ENCODE measurements at regions of chr13 and their contacts with region 1.

Region 1: DNA sequence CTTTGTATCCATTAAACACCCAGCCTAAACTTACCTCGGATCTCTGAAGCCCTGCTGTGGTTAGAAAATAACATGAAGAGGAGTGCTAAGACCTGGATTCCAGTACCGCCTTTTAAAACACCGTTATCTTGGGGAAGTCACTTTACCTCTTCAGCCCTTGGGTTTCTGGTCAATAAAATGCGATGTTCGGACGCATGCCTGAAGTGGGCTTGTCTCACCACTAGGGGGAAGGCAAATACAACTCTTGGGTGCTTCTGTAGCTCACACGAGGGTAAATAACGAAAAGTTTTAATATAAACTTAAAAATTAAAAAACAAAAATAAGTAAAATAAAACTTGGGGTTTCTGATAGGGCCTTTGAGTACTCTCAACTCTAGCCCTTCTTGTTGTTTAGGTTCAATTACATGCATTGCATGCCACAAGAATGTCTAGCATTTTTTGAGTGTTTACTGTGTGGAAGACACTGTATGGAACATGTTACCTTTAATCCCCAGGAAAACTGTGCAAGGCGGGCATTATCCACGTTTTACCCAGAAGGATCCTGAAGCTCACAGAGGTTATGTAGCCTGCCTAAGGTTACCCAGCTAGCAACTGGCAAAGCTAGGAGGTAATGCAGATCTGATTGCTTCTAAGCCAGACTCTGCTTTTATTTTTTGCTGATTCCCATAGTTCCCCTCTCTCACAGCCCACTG is 240.4 kb downstream of the LMO7 start:
- DNase-seq: peak; percentile 49 to 55
- H3K4me3 ChIP-seq: no peak overlapping the region
- H3K27ac ChIP-seq: no peak overlapping the region
- H3K4me1 ChIP-seq: no peaks in the 10 kb centered on the region
- H3K27me3 ChIP-seq: no peaks in the 10 kb centered on the region
- CTCF ChIP-seq: peak; percentile 70 to 87 (median 82)
- POLR2A ChIP-seq: no peak

Region 2: GRCh38 chr13:76473552-76474134 is 597.1 kb after region 1 on chr13:
- intact Hi-C with region 1: loop called (anchors 10 kb)
- DNase-seq: peak; percentile 58 to 75
- H3K4me3 ChIP-seq: no peak overlapping the region
- H3K27ac ChIP-seq: peak overlapping the region in 1 of 2 donors; percentile 1
- H3K4me1 ChIP-seq: no peaks in the 10 kb centered on the region
- H3K27me3 ChIP-seq: no peaks in the 10 kb centered on the region
- CTCF ChIP-seq: peak; percentile 72 to 82 (median 78)
- POLR2A ChIP-seq: no peak

Region 3: DNA sequence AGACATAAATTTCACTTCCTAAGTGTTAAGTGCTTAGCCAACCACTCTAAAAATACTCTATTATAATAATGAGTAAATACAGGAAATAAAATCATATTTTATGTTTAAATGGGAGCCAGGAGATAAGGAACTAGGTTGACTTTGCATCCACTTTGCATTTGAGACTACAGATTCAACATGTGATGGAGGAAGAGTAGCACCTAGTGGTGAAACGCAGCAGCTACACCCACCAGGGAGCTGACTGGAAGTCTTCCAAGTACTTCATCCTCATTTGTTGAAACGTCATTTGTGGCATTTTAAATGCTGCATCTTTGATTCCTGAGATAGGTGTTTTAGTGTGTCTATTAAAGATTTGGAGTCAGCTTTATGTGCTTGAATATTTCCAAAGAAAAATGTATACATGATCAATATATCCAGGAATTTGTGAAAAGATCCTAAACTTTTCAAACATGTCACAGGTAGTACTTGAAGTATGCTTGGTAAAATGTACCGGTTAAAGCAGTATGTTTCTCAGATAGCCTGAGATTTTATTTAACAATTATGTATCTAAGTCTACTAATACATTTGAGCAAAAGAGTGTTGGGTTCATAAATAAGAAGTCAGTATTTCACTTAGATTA is 1027.1 kb after region 1 on chr13:
- intact Hi-C with region 1: loop called (anchors 10 kb)
- DNase-seq: peak; percentile 46 to 62
- H3K4me3 ChIP-seq: no peak overlapping the region
- H3K27ac ChIP-seq: no peak overlapping the region
- H3K4me1 ChIP-seq: no peaks in the 10 kb centered on the region
- H3K27me3 ChIP-seq: no peaks in the 10 kb centered on the region
- CTCF ChIP-seq: peak; percentile 93 to 99 (median 96)
- POLR2A ChIP-seq: no peak